CD8-positive, alpha-beta T cell (primary cell): ENCODE measurements at regions of chr4 and their contacts with region 1.

Region 1: GRCh38 chr4:36244257-36245079 is at the start of gene ARAP2:
- DNase-seq: peak; percentile 45 to 91 (median 79)
- ATAC-seq: peak; percentile 76
- H3K4me3 ChIP-seq: peak within 1 kb of the TSS; percentile 87 to 93
- H3K4me3 Mint-ChIP-seq: peak within 1 kb of the TSS; percentile 91
- H3K27ac ChIP-seq: peak within 1 kb of the TSS; percentile 86 to 93
- H3K27ac Mint-ChIP-seq: peak within 1 kb of the TSS; percentile 96
- H3K4me1 ChIP-seq: peaks cover 20% of the 10 kb centered on the region
- H3K4me1 Mint-ChIP-seq: peaks cover 38% of the 10 kb centered on the region
- H3K27me3 ChIP-seq: no peaks in the 10 kb centered on the region
- H3K27me3 Mint-ChIP-seq: no peaks in the 10 kb centered on the region
- CTCF ChIP-seq: no peak
- total RNA-seq, gene ARAP2: 91.0 to 95.8 TPM

Region 2: GRCh38 chr4:36054750-36055467 is 189.6 kb before region 1 on chr4:
- CTCF ChIA-PET with region 1: no interaction called
- POLR2A ChIA-PET with region 1: no interaction called
- intact Hi-C with region 1: no loop called
- DNase-seq: no peak
- ATAC-seq: no peak
- H3K4me3 ChIP-seq: no peak overlapping the region
- H3K4me3 Mint-ChIP-seq: no peak overlapping the region
- H3K27ac ChIP-seq: no peak overlapping the region
- H3K27ac Mint-ChIP-seq: no peak overlapping the region
- H3K4me1 ChIP-seq: no peaks in the 10 kb centered on the region
- H3K4me1 Mint-ChIP-seq: no peaks in the 10 kb centered on the region
- H3K27me3 ChIP-seq: no peaks in the 10 kb centered on the region
- H3K27me3 Mint-ChIP-seq: no peaks in the 10 kb centered on the region
- CTCF ChIP-seq: no peak

Region 3: DNA sequence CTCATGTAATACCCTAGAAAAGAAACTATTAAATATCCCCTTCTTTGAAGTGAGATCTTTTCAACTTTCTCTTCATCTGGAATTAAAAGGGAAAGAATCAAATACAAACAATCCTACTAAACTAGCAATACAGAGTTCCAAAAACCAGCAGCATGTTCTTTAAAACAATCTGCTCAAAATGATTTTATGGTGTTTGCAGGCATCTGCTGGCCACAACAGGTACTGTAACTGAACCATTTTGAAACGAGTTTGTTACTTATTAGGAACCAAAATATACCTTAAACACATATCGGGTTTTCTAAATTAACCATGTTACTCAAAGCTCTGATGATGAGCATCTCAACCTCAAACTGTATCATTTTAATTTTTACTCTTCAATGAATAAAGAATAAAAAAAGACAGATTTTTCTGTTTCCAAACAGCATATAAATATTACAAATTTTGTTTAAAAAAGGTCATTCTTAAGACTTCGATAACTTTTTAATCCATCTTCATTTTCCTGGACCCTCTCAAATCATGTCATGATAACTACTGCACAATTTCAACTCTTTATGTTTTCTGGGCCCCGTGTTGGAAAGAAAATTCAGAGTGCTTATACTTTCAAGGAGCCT is 56.6 kb before region 1 on chr4:
- CTCF ChIA-PET with region 1: interaction called, 7 read pairs
- POLR2A ChIA-PET with region 1: interaction called, 14 read pairs
- intact Hi-C with region 1: loop called in 1 of 2 experiments (anchors 5 kb)
- DNase-seq: peak in 2 of 9 experiments; percentile 47 to 59
- ATAC-seq: no peak
- H3K4me3 ChIP-seq: no peak overlapping the region
- H3K4me3 Mint-ChIP-seq: no peak overlapping the region
- H3K27ac ChIP-seq: peak overlapping the region in 1 of 2 experiments; percentile 45
- H3K27ac Mint-ChIP-seq: no peak overlapping the region
- H3K4me1 ChIP-seq: peaks cover 20% of the 10 kb centered on the region
- H3K4me1 Mint-ChIP-seq: peaks cover 44% of the 10 kb centered on the region
- H3K27me3 ChIP-seq: no peaks in the 10 kb centered on the region
- H3K27me3 Mint-ChIP-seq: no peaks in the 10 kb centered on the region
- CTCF ChIP-seq: peak; percentile 72

Region 4: GRCh38 chr4:36208893-36209473 is 35.5 kb before region 1 on chr4:
- CTCF ChIA-PET with region 1: interaction called, 6 read pairs
- POLR2A ChIA-PET with region 1: interaction called, 4 read pairs
- intact Hi-C with region 1: loop called (anchors 5 kb)
- DNase-seq: peak in 8 of 9 experiments; percentile 16 to 79 (median 51)
- ATAC-seq: peak; percentile 82
- H3K4me3 ChIP-seq: peak overlapping the region in 1 of 2 experiments; percentile 6
- H3K4me3 Mint-ChIP-seq: peak overlapping the region; percentile 54
- H3K27ac ChIP-seq: peak overlapping the region in 1 of 2 experiments; percentile 51
- H3K27ac Mint-ChIP-seq: peak overlapping the region; percentile 86
- H3K4me1 ChIP-seq: peaks cover 17% of the 10 kb centered on the region
- H3K4me1 Mint-ChIP-seq: peaks cover 68% of the 10 kb centered on the region
- H3K27me3 ChIP-seq: no peaks in the 10 kb centered on the region
- H3K27me3 Mint-ChIP-seq: no peaks in the 10 kb centered on the region
- CTCF ChIP-seq: no peak

Region 5: GRCh38 chr4:36255577-36255976 is 11.1 kb after region 1 on chr4:
- CTCF ChIA-PET with region 1: interaction called, 39 read pairs
- POLR2A ChIA-PET with region 1: interaction called, 85 read pairs
- intact Hi-C with region 1: loop called (anchors 1 kb)
- DNase-seq: peak; percentile 26 to 95 (median 63)
- ATAC-seq: peak; percentile 93
- H3K4me3 ChIP-seq: no peak overlapping the region
- H3K4me3 Mint-ChIP-seq: peak overlapping the region; percentile 76
- H3K27ac ChIP-seq: peak overlapping the region; percentile 7 to 62
- H3K27ac Mint-ChIP-seq: peak overlapping the region; percentile 89
- H3K4me1 ChIP-seq: peaks cover 35% of the 10 kb centered on the region
- H3K4me1 Mint-ChIP-seq: peaks cover 51% of the 10 kb centered on the region
- H3K27me3 ChIP-seq: no peaks in the 10 kb centered on the region
- H3K27me3 Mint-ChIP-seq: no peaks in the 10 kb centered on the region
- CTCF ChIP-seq: no peak

Region 6: DNA sequence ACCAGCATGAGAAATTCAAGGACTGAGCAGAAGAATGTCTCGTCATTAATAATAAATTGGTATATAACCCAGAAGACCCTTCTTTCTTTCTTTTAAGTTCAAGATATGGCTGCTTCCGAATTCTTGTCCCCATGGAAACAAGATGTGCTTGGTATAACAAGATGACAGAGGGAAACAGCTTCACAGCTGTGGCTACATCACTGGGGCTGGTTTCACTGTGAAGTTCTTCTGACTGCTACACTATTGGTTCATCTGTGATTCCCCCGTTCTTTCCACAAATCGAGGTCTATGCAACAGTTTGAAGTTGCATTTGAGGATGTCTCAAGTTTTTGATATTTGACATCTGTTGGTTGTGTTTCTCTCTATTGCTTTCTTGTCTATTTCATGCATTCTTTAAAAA is 24.6 kb after region 1 on chr4:
- CTCF ChIA-PET with region 1: interaction called, 6 read pairs
- POLR2A ChIA-PET with region 1: interaction called, 19 read pairs
- intact Hi-C with region 1: no loop called
- DNase-seq: peak in 5 of 9 experiments; percentile 37 to 94 (median 73)
- ATAC-seq: peak; percentile 95
- H3K4me3 ChIP-seq: no peak overlapping the region
- H3K4me3 Mint-ChIP-seq: peak overlapping the region; percentile 4
- H3K27ac ChIP-seq: peak overlapping the region; percentile 16 to 78
- H3K27ac Mint-ChIP-seq: peak overlapping the region; percentile 79
- H3K4me1 ChIP-seq: peaks cover 18% of the 10 kb centered on the region
- H3K4me1 Mint-ChIP-seq: peaks cover 44% of the 10 kb centered on the region
- H3K27me3 ChIP-seq: no peaks in the 10 kb centered on the region
- H3K27me3 Mint-ChIP-seq: no peaks in the 10 kb centered on the region
- CTCF ChIP-seq: no peak

Region 7: DNA sequence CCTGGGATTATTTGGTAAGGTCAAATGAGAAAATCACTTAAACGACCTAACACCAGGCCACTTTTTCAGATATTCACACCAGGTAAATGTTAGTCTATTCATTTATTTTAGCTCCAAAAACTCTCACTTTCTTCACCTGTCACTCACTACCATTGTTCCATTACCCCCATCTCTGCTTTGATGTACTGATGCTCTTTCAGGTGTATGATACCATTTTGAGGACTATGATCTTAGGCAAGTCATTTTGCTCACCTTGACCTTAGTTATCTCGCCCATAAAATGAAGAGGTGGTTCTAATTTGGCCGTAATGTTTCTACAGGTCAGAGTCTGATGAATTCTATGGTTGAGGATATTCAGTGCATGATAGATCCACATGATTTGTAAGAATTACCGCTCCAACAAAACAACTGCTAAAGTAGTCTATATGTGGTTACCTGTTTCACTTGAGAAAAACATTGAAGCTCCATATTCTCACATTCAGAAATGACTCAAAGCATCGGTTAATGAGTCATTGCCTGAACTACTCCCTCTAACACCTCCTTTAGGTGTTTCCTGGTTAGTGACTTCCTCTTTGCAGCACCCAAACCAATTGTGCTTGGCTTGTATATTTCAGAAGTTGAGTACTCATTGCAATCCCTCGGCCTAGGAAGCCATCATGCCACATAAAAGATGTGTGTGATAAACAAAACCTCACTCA is 41.5 kb after region 1 on chr4:
- CTCF ChIA-PET with region 1: interaction called, 8 read pairs
- POLR2A ChIA-PET with region 1: interaction called, 21 read pairs
- intact Hi-C with region 1: loop called (anchors 1 to 2 kb)
- DNase-seq: peak in 8 of 9 experiments; percentile 12 to 93 (median 58)
- ATAC-seq: peak; percentile 87
- H3K4me3 ChIP-seq: peak overlapping the region in 1 of 2 experiments; percentile 57
- H3K4me3 Mint-ChIP-seq: peak overlapping the region; percentile 59
- H3K27ac ChIP-seq: peak overlapping the region; percentile 54 to 87
- H3K27ac Mint-ChIP-seq: peak overlapping the region; percentile 92
- H3K4me1 ChIP-seq: peaks cover 11% of the 10 kb centered on the region
- H3K4me1 Mint-ChIP-seq: peaks cover 49% of the 10 kb centered on the region
- H3K27me3 ChIP-seq: no peaks in the 10 kb centered on the region
- H3K27me3 Mint-ChIP-seq: no peaks in the 10 kb centered on the region
- CTCF ChIP-seq: no peak

Region 8: DNA sequence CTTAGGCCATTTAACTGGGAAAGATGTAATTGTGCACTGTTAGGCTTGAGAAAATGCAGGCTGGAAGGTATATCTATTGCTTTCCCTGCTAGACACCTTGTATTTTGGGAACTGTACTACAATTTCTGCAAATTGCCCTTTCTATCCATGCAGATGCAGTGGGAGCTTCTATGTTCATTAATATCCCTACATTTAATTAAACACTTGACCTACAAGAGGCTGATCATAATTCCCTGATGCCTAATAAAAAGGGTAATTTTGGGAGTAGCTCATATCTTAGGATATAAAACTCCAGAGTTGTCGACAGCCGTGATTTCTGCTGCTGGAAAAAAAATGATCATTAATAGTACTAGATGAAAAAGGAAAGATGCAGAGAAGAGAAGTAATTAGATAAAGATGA is 56.7 kb after region 1 on chr4:
- CTCF ChIA-PET with region 1: no interaction called
- POLR2A ChIA-PET with region 1: no interaction called
- intact Hi-C with region 1: no loop called
- DNase-seq: no peak
- ATAC-seq: no peak
- H3K4me3 ChIP-seq: no peak overlapping the region
- H3K4me3 Mint-ChIP-seq: no peak overlapping the region
- H3K27ac ChIP-seq: no peak overlapping the region
- H3K27ac Mint-ChIP-seq: no peak overlapping the region
- H3K4me1 ChIP-seq: no peaks in the 10 kb centered on the region
- H3K4me1 Mint-ChIP-seq: peaks cover 3% of the 10 kb centered on the region
- H3K27me3 ChIP-seq: no peaks in the 10 kb centered on the region
- H3K27me3 Mint-ChIP-seq: no peaks in the 10 kb centered on the region
- CTCF ChIP-seq: no peak

Region 9: DNA sequence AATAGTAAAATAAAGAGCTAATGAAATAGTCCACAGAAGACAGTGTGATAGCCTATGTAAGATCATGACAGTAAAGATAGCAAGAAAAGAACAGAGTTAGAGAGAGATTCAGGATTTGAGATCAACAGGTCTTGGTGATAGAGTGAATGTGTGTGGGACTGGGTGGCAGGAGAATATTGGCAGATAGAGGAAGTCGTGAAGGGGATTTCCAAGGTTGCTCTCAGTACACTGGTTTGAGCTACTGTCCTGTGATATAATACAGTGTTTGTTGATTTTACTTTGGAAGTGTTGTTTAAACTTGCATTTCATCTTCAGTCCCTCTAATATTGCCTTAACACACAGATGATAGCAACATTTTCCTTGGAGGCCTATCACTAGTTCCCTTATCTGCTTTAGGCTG is 81.0 kb after region 1 on chr4:
- CTCF ChIA-PET with region 1: interaction called, 5 read pairs
- POLR2A ChIA-PET with region 1: no interaction called
- intact Hi-C with region 1: loop called in 1 of 2 experiments (anchors 2 kb)
- DNase-seq: peak in 2 of 9 experiments; percentile 60 to 75
- ATAC-seq: no peak
- H3K4me3 ChIP-seq: no peak overlapping the region
- H3K4me3 Mint-ChIP-seq: no peak overlapping the region
- H3K27ac ChIP-seq: peak overlapping the region in 1 of 2 experiments; percentile 11
- H3K27ac Mint-ChIP-seq: peak overlapping the region; percentile 55
- H3K4me1 ChIP-seq: peaks cover 27% of the 10 kb centered on the region
- H3K4me1 Mint-ChIP-seq: peaks cover 46% of the 10 kb centered on the region
- H3K27me3 ChIP-seq: no peaks in the 10 kb centered on the region
- H3K27me3 Mint-ChIP-seq: no peaks in the 10 kb centered on the region
- CTCF ChIP-seq: no peak